SK-N-SH (cell line): ENCODE measurements at regions of chr17 and their contacts with region 1.

Region 1: DNA sequence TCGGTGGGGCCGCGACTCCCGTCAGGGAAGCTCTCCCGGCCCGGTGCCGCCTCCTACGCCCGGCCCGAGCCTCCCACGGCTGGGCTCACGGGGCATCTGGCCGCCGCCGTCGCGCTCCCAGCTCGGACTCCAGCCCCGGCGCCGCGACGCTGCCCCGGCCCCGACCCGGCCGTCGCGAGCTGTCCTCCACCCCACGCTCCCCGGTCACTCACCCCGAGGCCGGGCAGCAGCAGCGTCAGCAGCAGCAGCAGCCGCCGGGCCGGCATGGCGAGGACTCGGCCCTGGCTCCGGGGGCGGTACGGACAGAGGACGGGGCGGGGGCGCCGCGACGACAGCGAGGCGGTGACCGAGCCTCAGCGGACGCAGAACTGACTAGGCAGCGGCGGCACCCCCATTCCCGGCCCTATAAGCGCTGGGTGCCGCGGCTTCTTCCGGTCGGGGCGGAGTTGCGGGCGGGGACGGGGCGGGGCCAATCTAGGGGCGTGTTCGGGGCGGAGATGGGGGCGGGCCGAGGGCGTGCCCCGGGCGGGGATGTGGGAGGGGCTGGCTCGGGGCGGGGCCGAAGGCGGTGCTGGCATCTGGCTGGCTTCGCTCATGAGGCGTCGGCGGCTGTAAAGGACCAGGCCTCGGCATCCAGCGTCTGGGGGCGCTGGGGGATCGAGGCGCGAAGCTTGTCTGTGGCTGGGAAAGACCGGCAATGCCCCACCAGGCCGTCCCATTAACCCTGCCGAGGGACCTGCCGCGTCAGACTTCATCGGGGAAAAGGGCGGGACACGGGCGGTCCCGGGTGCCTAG is at the start of gene ERN1:
- DNase-seq: peak; percentile 99
- H3K4me3 ChIP-seq: peak within 1 kb of the TSS; percentile 72 to 82
- H3K27ac ChIP-seq: peak within 1 kb of the TSS; percentile 62 to 68
- H3K4me1 ChIP-seq: peaks cover 13 to 18% of the 10 kb centered on the region in 2 experiments; a peak in 3 of 4 replicates
- H3K27me3 ChIP-seq: no peaks in the 10 kb centered on the region
- CTCF ChIP-seq: 0 out of 2 replicates have a peak, but pooled peaks have one; percentile 8
- EP300 ChIP-seq: no peak
- RAD21 ChIP-seq: 0 out of 2 replicates have a peak, but pooled peaks have one; percentile 23
- polyA plus RNA-seq, gene ERN1: 6.9 and 7.3 TPM in 2 replicates

Region 2: GRCh38 chr17:63946440-63947367 is 183.3 kb before region 1 on chr17:
- CTCF ChIA-PET with region 1: interaction called, 11 read pairs
- POLR2A ChIA-PET with region 1: no interaction called
- DNase-seq: peak; percentile 91
- H3K4me3 ChIP-seq: no peak overlapping the region
- H3K27ac ChIP-seq: no peak overlapping the region
- H3K4me1 ChIP-seq: no peaks in the 10 kb centered on the region
- H3K27me3 ChIP-seq: no peaks in the 10 kb centered on the region; the same call in 1 of the 2 replicates
- CTCF ChIP-seq: peak; percentile 77
- EP300 ChIP-seq: no peak
- RAD21 ChIP-seq: peak; percentile 50

Region 3: GRCh38 chr17:64036198-64036922 is 93.6 kb before region 1 on chr17:
- CTCF ChIA-PET with region 1: interaction called, 810 read pairs
- POLR2A ChIA-PET with region 1: no interaction called
- DNase-seq: no peak
- H3K4me3 ChIP-seq: no peak overlapping the region
- H3K27ac ChIP-seq: no peak overlapping the region
- H3K4me1 ChIP-seq: no peaks in the 10 kb centered on the region
- H3K27me3 ChIP-seq: no peaks in the 10 kb centered on the region
- CTCF ChIP-seq: no peak; the same call in 1 of the 2 replicates
- EP300 ChIP-seq: no peak
- RAD21 ChIP-seq: no peak

Region 4: GRCh38 chr17:64063766-64064224 is 66.2 kb before region 1 on chr17:
- CTCF ChIA-PET with region 1: interaction called, 160 read pairs
- POLR2A ChIA-PET with region 1: no interaction called
- DNase-seq: peak; percentile 72
- H3K4me3 ChIP-seq: no peak overlapping the region
- H3K27ac ChIP-seq: no peak overlapping the region
- H3K4me1 ChIP-seq: no peaks in the 10 kb centered on the region
- H3K27me3 ChIP-seq: no peaks in the 10 kb centered on the region
- CTCF ChIP-seq: peak; percentile 49
- EP300 ChIP-seq: no peak
- RAD21 ChIP-seq: peak; percentile 66

Region 5: GRCh38 chr17:64115871-64116534 is 14.0 kb before region 1 on chr17:
- CTCF ChIA-PET with region 1: interaction called, 10 read pairs
- POLR2A ChIA-PET with region 1: interaction called, 4 read pairs
- DNase-seq: no peak
- H3K4me3 ChIP-seq: no peak overlapping the region
- H3K27ac ChIP-seq: no peak overlapping the region
- H3K4me1 ChIP-seq: peaks cover 0 to 2% of the 10 kb centered on the region in 2 experiments; a peak in 1 of 4 replicates
- H3K27me3 ChIP-seq: no peaks in the 10 kb centered on the region
- CTCF ChIP-seq: no peak
- EP300 ChIP-seq: no peak
- RAD21 ChIP-seq: no peak

Region 6: DNA sequence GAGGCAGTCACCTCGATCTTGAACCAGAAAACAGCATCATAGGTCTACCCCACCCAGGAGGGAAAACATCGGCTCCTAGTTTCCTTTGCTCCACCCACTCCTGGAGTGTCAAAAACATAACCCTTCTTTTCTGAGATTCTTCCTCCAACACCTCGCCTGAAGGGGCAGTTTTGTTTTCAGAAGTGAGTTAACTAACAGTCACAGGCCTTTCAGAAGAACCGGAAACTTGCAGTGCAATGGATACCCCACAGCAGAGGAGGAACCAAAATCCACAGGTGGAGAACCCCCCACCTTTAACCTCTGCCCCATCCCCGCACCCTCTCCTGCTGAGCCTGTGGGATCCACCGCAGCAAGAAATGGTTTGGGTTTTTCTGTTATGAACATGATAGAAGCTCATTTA is 140.9 kb after region 1 on chr17:
- CTCF ChIA-PET with region 1: interaction called, 16 read pairs
- POLR2A ChIA-PET with region 1: no interaction called
- DNase-seq: no peak
- H3K4me3 ChIP-seq: no peak overlapping the region
- H3K27ac ChIP-seq: no peak overlapping the region
- H3K4me1 ChIP-seq: peaks cover 0 to 7% of the 10 kb centered on the region in 2 experiments; a peak in 1 of 4 replicates
- H3K27me3 ChIP-seq: no peaks in the 10 kb centered on the region
- CTCF ChIP-seq: no peak
- EP300 ChIP-seq: no peak
- RAD21 ChIP-seq: no peak